ENCODE measurements at regions of chr17 and their contacts with region 1.

Region 1: GRCh38 chr17:5438716-5439445 is at the start of gene C1QBP:
- DNase-seq: peak; percentile 96 to 97
- ATAC-seq: peak; percentile 93 to 94
- H3K4me3 ChIP-seq: peak within 1 kb of the TSS; percentile 77
- H3K27ac ChIP-seq: peak within 1 kb of the TSS; percentile 92 to 97
- H3K4me1 ChIP-seq: peaks cover 29% of the 10 kb centered on the region
- CTCF ChIP-seq: peak; percentile 99
- EP300 ChIP-seq: no peak
- POLR2A ChIP-seq: peak; percentile 93
- RAD21 ChIP-seq: peak; percentile 74 to 81
- polyA plus RNA-seq, gene C1QBP: 448 and 683 TPM in 2 replicates

Region 2: DNA sequence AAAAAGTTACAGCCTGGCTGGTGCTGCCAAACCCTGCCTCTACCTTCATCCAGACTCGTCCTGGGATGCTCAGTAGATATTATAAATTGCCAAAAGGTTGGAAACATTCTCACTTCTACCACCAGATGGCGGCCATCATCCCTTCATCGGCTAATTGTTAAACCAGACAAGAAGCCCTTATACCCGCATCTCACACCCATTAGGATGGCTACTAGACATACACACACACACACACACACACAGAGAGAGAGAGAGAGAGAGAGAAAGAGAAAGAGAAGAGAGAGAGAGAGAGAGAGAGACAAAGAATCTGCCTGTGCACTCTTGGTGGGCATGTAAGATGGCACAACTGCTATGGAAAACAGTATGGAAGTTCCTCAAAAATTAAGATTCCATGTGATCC is 189.3 kb before region 1 on chr17:
- CTCF ChIA-PET with region 1: interaction called, 20 read pairs
- POLR2A ChIA-PET with region 1: no interaction called
- DNase-seq: peak; percentile 83
- ATAC-seq: peak; percentile 91 to 94
- H3K4me3 ChIP-seq: no peak overlapping the region
- H3K27ac ChIP-seq: no peak overlapping the region
- H3K4me1 ChIP-seq: no peaks in the 10 kb centered on the region
- CTCF ChIP-seq: peak; percentile 81
- EP300 ChIP-seq: no peak
- POLR2A ChIP-seq: no peak
- RAD21 ChIP-seq: peak; percentile 71 to 84

Region 3: DNA sequence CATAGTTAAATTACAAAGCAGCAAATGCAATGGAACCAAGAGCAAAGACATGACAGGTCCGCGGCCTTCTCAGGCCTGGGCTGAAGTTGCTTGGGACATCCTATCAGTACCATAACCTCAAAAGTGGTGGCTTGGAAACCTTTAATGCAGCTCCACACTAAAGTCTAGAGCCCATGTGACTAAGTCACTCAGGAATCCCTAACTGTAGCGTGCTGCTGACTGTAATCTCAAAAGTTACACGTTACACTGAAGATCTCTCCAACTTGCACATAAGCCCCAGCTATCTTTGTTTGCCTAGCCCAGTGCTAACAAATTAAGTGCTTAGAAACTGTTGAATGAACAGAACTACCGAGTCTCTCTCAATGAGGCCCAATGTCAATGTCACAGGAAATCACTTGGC is 47.2 kb before region 1 on chr17:
- CTCF ChIA-PET with region 1: interaction called, 10 read pairs
- POLR2A ChIA-PET with region 1: interaction called, 3 read pairs
- DNase-seq: no peak
- ATAC-seq: no peak
- H3K4me3 ChIP-seq: no peak overlapping the region
- H3K27ac ChIP-seq: no peak overlapping the region
- H3K4me1 ChIP-seq: no peaks in the 10 kb centered on the region
- CTCF ChIP-seq: no peak
- EP300 ChIP-seq: no peak
- POLR2A ChIP-seq: no peak
- RAD21 ChIP-seq: no peak

Region 4: DNA sequence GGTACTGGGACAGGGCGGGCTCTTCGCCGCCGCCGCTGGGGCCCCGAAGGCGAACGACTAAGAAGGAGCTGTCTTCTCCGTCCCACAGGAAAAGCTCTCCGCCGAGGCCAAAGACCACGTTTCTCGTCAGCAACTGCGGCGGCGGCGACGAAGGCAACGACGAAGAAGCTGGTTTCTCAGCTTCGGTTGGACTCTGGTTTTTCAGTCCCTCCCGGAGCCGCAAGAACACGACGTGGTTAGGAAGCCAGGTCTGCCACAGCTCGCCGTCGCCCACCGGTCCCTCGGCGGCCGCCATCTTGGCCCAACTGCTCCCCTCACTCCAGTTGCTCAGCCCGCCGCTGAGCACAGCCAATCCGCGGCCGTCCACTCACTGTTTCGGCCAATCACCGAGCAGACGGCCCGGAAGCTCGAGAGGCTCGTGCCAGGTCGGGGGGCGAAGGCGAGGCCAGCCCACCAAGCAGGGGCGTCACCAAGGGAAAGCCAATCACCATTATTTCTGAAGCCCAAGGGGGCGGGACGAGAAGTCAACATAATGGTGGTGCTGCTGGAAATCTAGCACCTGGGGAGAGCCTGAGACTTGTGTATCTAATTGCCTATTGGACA is 19.4 kb before region 1 on chr17 and contains the start of gene NUP88:
- CTCF ChIA-PET with region 1: interaction called, 178 read pairs
- POLR2A ChIA-PET with region 1: interaction called, 17 read pairs
- DNase-seq: peak; percentile 98 to 99
- ATAC-seq: peak; percentile 96 to 98
- H3K4me3 ChIP-seq: peak within 1 kb of the TSS; percentile 78
- H3K27ac ChIP-seq: peak within 1 kb of the TSS; percentile 89 to 90
- H3K4me1 ChIP-seq: peaks cover 40% of the 10 kb centered on the region
- CTCF ChIP-seq: no peak
- EP300 ChIP-seq: no peak
- POLR2A ChIP-seq: peak; percentile 98
- RAD21 ChIP-seq: no peak
- polyA plus RNA-seq, gene NUP88: 175 and 180 TPM in 2 replicates

Region 5: DNA sequence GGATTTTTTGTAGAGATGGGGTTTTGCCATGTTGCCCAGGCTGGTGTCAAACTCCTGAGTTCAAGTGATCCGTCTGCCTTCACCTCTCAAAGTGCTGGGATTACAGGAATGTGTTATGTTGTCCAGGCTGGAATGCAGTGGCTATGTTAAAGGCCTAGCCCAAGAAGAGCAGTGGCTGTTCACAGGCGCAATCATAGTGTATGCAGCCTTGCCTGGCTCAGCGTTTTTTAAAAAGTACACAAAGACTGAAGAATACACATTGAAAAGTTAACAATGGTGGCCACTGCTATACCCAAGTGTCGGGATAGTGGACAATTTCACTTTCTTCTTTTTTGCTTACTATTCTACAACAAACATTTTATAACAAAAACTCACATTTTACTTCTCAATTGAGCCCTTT is 40.1 kb after region 1 on chr17:
- CTCF ChIA-PET with region 1: interaction called, 43 read pairs
- POLR2A ChIA-PET with region 1: no interaction called
- DNase-seq: no peak
- ATAC-seq: no peak
- H3K4me3 ChIP-seq: no peak overlapping the region
- H3K27ac ChIP-seq: no peak overlapping the region
- H3K4me1 ChIP-seq: no peaks in the 10 kb centered on the region
- CTCF ChIP-seq: no peak
- EP300 ChIP-seq: no peak
- POLR2A ChIP-seq: no peak
- RAD21 ChIP-seq: no peak

Region 6: DNA sequence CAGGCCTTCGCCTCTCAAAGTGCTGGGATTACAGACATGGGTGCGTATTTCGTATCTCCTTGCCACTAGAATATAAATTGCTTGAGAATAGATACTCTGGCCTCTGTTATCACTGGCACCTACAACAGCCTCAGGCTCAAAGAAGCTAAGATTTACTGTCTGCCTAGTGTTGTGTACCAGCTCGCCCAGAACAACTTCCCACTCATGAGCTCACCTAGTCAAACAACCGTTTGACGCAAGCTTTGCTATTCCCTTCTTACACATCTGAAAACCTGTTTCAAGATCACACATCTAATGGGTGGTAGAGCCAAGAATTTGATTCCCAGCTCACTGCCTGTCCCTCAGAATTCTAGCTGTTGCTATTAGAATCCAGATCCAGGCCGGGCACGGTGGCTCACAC is 71.9 kb after region 1 on chr17:
- CTCF ChIA-PET with region 1: no interaction called
- POLR2A ChIA-PET with region 1: no interaction called
- DNase-seq: no peak
- ATAC-seq: no peak
- H3K4me3 ChIP-seq: no peak overlapping the region
- H3K27ac ChIP-seq: no peak overlapping the region
- H3K4me1 ChIP-seq: peaks cover 5% of the 10 kb centered on the region
- CTCF ChIP-seq: no peak
- EP300 ChIP-seq: no peak
- POLR2A ChIP-seq: no peak
- RAD21 ChIP-seq: no peak

Region 7: GRCh38 chr17:5644065-5644464 is 205.2 kb after region 1 on chr17:
- CTCF ChIA-PET with region 1: no interaction called
- POLR2A ChIA-PET with region 1: no interaction called
- DNase-seq: no peak
- ATAC-seq: no peak
- H3K4me3 ChIP-seq: no peak overlapping the region
- H3K27ac ChIP-seq: no peak overlapping the region
- H3K4me1 ChIP-seq: no peaks in the 10 kb centered on the region
- CTCF ChIP-seq: no peak
- EP300 ChIP-seq: no peak
- POLR2A ChIP-seq: no peak
- RAD21 ChIP-seq: no peak

Measured in A549 (cell line).